GM10248 (cell line): ENCODE measurements at regions of chr6 and their contacts with region 1.

Region 1: GRCh38 chr6:158644231-158645063 is at the start of gene DYNLT1:
- DNase-seq: peak; percentile 94
- CTCF ChIP-seq: no peak

Region 2: DNA sequence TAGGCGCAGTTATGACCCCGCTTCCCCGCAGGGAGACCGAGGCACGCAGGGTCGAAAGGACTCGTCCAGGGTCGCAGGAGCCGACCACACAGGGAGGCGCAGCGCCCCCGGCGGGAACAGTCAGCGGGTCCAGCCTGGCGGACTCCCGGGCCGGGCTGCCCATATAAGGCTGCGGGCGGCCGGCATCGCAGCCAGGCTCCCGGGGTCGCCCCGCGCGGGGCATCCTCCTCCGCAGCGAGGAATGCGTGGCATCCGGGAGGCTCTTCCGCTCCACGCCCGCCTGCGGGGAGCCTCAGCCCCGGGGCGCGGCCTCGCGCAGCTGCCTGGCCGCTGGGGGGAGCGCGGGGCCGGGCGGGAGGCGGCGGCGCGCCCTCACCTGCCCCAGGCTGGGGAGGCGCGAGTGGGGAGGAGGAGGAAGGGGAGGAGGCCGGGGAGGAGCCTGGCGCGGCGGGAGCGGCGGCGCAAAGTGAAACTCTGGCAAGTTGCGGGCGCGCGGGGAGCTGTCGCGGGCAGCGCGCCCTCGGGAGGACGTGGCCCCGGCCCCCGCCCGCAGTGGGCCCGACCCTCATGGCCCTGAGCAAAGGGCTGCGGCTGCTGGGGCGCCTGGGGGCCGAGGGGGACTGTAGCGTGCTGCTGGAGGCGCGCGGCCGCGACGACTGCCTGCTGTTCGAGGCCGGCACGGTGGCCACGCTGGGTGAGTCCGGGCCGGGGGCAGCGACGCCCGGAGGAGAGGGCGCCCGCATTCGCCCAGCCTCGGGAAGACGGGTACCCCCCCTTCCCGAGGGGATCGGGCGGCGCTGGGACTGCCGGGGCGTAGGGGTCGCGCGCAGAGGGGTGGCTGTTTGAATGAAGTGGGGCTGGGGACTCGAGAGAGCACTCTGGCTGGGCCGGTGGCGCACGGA is 662.8 kb before region 1 on chr6 and contains the start of gene SYNJ2:
- CTCF ChIA-PET with region 1: no interaction called
- POLR2A ChIA-PET with region 1: no interaction called
- DNase-seq: peak; percentile 84
- CTCF ChIP-seq: peak; percentile 37

Region 3: GRCh38 chr6:158611541-158612370 is 32.7 kb before region 1 on chr6:
- CTCF ChIA-PET with region 1: no interaction called
- POLR2A ChIA-PET with region 1: no interaction called
- DNase-seq: no peak
- CTCF ChIP-seq: no peak

Region 4: DNA sequence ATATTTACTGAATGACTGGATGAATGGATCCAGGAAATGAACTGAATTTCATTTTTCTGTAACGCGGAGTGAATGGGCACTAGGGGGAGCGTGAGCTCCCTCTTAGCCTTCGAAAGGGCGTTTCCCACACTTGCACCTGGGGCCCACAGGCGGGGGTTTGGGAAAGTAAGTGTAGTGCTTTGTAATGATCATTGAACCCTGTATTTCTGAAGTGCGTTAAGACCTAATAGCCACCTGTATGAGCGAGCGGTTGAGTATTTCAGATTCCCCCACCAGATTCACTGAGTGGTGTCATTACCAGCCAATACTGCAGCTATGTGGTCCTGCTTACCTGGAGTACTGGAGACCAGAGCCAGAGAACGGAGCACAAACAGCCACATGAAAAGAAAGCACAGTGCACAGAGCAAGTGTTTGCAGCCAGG is 15.9 kb after region 1 on chr6:
- CTCF ChIA-PET with region 1: interaction called, 42 read pairs
- POLR2A ChIA-PET with region 1: no interaction called
- DNase-seq: peak; percentile 65
- CTCF ChIP-seq: peak; percentile 58